Endothelial cell of umbilical vein (primary cell): ENCODE measurements at regions of chr2 and their contacts with region 1.

Region 1: DNA sequence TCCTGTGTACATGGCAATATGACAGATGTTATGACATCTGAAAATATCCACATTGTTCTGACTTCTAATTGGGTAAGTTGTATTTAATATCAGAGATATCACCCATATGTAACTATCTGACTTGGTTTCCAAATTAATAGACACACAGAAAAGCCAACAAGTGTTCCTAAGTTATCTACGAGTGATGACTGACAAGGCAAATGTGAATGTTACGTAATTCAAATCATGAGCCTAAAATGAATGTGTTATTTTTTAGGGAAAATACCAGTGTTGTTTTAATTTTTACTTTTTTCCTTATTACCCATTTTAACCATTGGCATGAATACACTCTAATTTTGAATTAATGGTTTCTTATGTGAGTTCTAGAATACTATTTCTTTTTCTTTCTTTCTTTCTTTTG is 15.8 kb upstream of the PNO1 start:
- DNase-seq: no peak
- H3K4me3 ChIP-seq: no peak overlapping the region
- H3K27ac ChIP-seq: no peak overlapping the region
- H3K4me1 ChIP-seq: no peaks in the 10 kb centered on the region
- H3K27me3 ChIP-seq: no peaks in the 10 kb centered on the region
- CTCF ChIP-seq: no peak
- POLR2A ChIP-seq: no peak

Region 2: DNA sequence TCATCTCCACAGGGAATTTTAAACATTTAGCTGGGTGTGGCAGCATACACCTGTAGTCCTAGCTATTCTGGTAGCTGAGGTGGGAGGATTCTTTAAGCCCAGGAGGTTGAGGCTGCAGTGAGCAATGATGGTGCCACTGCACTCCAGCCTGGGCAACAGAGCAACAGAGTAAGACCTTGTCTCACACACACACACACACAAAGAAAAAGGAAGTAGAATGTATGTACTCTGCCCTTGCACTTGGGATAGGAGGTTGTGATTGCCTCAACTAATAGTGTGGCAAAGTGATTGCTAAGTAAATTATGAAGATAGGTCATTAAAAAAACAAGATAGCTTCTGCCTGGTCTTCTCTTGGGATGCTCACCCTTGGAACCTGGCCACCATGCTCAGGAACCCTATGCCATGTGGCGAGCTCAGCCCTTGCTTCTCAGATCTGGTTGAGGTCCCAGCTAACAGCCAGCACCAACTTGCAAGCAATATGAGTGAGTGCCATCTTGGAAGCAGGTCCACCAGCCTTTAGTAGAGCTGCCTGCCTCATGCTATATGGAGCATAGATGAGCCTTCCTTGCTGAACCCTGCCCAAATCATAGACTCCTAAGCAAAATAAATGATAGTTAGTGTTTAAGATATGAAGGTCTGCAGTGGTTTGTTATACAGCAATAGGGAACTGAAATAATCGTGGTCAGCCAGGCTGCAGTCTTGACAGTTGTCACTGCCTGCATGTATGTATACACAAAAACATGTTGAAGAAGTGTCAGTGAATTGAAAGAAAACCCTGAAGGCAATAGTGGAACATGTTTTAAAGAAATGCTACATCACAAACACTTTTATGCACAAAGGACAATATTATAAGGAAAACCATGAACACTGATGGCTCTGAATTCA is 14.3 kb before region 1 on chr2:
- CTCF ChIA-PET with region 1: interaction called, 3 read pairs
- POLR2A ChIA-PET with region 1: interaction called, 10 read pairs
- dilution Hi-C with region 1: no loop called
- intact Hi-C with region 1: no loop called
- DNase-seq: no peak
- H3K4me3 ChIP-seq: no peak overlapping the region
- H3K27ac ChIP-seq: no peak overlapping the region
- H3K4me1 ChIP-seq: peaks cover 1% of the 10 kb centered on the region
- H3K27me3 ChIP-seq: no peaks in the 10 kb centered on the region
- CTCF ChIP-seq: no peak
- POLR2A ChIP-seq: no peak